GM12878 (cell line): ENCODE measurements at regions of chr20 and their contacts with region 1.

Region 1: GRCh38 chr20:31822421-31823330 is 3.5 kb downstream of the MYLK2 start:
- DNase-seq: no peak
- ATAC-seq: peak; percentile 97
- H3K4me3 ChIP-seq: no peak overlapping the region
- H3K27ac ChIP-seq: no peak overlapping the region
- H3K4me1 ChIP-seq: no peaks in the 10 kb centered on the region
- H3K27me3 ChIP-seq: no peaks in the 10 kb centered on the region
- CTCF ChIP-seq: peak; percentile 96 to 98 (median 98); a peak in 5 of 6 replicates
- EP300 ChIP-seq: no peak
- POLR2A ChIP-seq: no peak
- RAD21 ChIP-seq: peak; percentile 86

Region 2: GRCh38 chr20:31236953-31237352 is 585.7 kb before region 1 on chr20:
- CTCF ChIA-PET with region 1: no interaction called
- POLR2A ChIA-PET with region 1: no interaction called
- RAD21 ChIA-PET with region 1: no interaction called
- SMC1A ChIA-PET with region 1: no interaction called
- in situ Hi-C with region 1: no loop called
- intact Hi-C with region 1: no loop called
- DNase-seq: no peak
- ATAC-seq: no peak
- H3K4me3 ChIP-seq: no peak overlapping the region
- H3K27ac ChIP-seq: no peak overlapping the region
- H3K4me1 ChIP-seq: no peaks in the 10 kb centered on the region
- H3K27me3 ChIP-seq: no peaks in the 10 kb centered on the region
- CTCF ChIP-seq: no peak
- EP300 ChIP-seq: no peak
- POLR2A ChIP-seq: no peak
- RAD21 ChIP-seq: no peak

Region 3: DNA sequence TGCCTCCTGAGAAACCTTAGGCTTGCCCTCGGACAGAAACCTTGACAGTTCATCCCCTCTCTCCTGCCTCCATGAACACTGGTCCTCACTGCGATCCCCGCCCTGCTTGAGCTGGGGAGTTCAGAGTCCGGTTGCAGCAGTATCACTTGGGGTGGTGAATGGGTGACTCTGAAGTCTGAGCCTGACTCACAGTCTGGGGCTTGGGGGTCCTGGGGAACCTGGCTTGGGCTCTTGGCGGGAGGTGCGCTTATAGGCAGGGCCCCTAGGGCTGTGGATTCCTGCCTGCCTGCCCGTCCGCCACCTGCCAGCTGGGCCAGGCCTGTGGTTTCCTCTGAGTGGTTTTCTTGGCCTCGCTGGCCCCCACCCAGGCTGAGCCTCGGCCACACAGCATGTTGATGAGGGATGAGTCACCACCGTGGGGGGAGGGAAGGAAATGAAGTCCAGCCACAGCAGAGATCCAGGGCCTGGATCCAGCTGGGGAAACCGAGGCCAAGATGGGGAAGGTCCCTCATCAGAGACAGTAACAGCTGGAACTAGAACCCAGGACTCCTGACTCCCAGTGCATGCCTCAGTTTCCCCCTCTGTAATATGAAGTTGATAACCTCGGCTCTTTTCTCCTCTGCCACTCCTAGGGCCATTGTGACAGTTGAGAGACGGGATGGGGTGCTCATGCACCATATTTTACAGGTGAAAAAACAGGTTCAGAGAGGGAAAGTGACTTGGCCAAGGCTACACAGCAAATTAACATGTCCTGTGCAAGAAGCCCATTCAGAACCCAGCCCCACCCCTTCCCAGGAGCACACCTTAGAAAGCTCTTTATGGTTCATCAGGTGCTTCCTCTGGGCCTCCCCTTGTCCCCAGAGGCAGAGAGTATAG is 13.5 kb after region 1 on chr20:
- CTCF ChIA-PET with region 1: interaction called, 32 read pairs
- POLR2A ChIA-PET with region 1: interaction called, 3 read pairs
- RAD21 ChIA-PET with region 1: no interaction called
- SMC1A ChIA-PET with region 1: interaction called, 6 read pairs
- in situ Hi-C with region 1: no loop called
- intact Hi-C with region 1: no loop called
- DNase-seq: peak; percentile 23
- ATAC-seq: peak; percentile 88
- H3K4me3 ChIP-seq: no peak overlapping the region
- H3K27ac ChIP-seq: no peak overlapping the region
- H3K4me1 ChIP-seq: peaks cover 8% of the 10 kb centered on the region; the same call in 1 of the 2 replicates
- H3K27me3 ChIP-seq: no peaks in the 10 kb centered on the region
- CTCF ChIP-seq: no peak
- EP300 ChIP-seq: no peak
- POLR2A ChIP-seq: no peak
- RAD21 ChIP-seq: no peak

Region 4: DNA sequence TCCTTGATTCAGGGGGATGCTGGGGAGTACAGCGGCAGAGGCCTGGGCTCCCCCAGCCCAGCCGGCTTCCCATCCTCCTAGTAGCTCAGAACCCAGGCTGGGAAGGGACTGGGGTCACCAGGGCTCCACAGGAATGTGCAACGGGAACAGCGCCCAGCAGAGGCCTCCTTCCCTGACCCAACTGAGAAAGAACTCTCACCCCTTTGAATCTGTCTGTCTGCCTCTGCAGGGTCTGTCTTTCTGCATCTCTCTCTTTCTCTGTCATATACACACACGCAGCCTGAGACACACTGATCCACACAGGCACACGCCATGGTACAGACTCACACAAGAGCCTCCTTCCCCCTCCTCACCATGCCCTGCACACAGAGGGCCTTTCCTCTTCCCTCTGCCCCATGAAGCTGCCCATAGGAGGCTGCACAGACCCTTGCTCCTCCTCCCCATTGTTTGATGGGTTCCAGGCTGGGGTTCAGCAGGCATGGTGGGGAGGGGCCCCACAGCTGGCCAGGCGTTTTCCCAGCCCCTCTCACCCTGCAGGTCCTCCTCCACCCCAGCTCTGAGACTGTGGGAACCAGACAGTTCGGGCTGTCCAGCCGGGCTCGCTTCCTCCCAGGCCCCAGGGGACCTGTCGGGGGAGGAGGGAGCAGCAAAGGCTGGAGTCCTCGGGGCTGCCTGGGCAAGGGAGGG is 19.9 kb after region 1 on chr20:
- CTCF ChIA-PET with region 1: interaction called, 109 read pairs
- POLR2A ChIA-PET with region 1: no interaction called
- RAD21 ChIA-PET with region 1: interaction called, 25 read pairs
- SMC1A ChIA-PET with region 1: interaction called, 7 read pairs
- in situ Hi-C with region 1: no loop called
- intact Hi-C with region 1: loop called (anchors 1 kb)
- DNase-seq: no peak
- ATAC-seq: peak; percentile 24
- H3K4me3 ChIP-seq: no peak overlapping the region
- H3K27ac ChIP-seq: no peak overlapping the region
- H3K4me1 ChIP-seq: peaks cover 5% of the 10 kb centered on the region; the same call in 1 of the 2 replicates
- H3K27me3 ChIP-seq: no peaks in the 10 kb centered on the region
- CTCF ChIP-seq: no peak
- EP300 ChIP-seq: no peak
- POLR2A ChIP-seq: no peak
- RAD21 ChIP-seq: no peak